Sigmoid colon (tissue), 7 donors: ENCODE measurements at regions of chr9 and their contacts with region 1.

Region 1: GRCh38 chr9:87516222-87516925 is 18.7 kb downstream of the DAPK1 start:
- DNase-seq: peak; percentile 86
- H3K4me3 ChIP-seq: no peak overlapping the region
- H3K27ac ChIP-seq: peak overlapping the region; percentile 39 to 84 (median 68)
- H3K4me1 ChIP-seq: peaks cover 0 to 86% (median 70%) of the 10 kb centered on the region in 4 donors
- H3K27me3 ChIP-seq: no peaks in the 10 kb centered on the region
- CTCF ChIP-seq: no peak
- EP300 ChIP-seq: no peak
- POLR2A ChIP-seq: no peak

Region 2: GRCh38 chr9:87436716-87437115 is 79.7 kb before region 1 on chr9:
- intact Hi-C with region 1: no loop called
- DNase-seq: no peak
- H3K4me3 ChIP-seq: no peak overlapping the region
- H3K27ac ChIP-seq: no peak overlapping the region
- H3K4me1 ChIP-seq: peaks cover 0 to 7% (median 0%) of the 10 kb centered on the region in 4 donors
- H3K27me3 ChIP-seq: no peaks in the 10 kb centered on the region
- CTCF ChIP-seq: no peak
- EP300 ChIP-seq: no peak
- POLR2A ChIP-seq: no peak

Region 3: GRCh38 chr9:87554171-87554917 is 38.0 kb after region 1 on chr9:
- intact Hi-C with region 1: loop called (anchors 5 kb)
- DNase-seq: no peak
- H3K4me3 ChIP-seq: no peak overlapping the region
- H3K27ac ChIP-seq: peak overlapping the region; percentile 54 to 81 (median 72)
- H3K4me1 ChIP-seq: peaks cover 0 to 95% (median 82%) of the 10 kb centered on the region in 4 donors
- H3K27me3 ChIP-seq: no peaks in the 10 kb centered on the region
- CTCF ChIP-seq: no peak
- EP300 ChIP-seq: no peak
- POLR2A ChIP-seq: no peak

Region 4: GRCh38 chr9:87599901-87600610 is 83.7 kb after region 1 on chr9:
- intact Hi-C with region 1: loop called (anchors 5 kb)
- DNase-seq: peak; percentile 82
- H3K4me3 ChIP-seq: no peak overlapping the region
- H3K27ac ChIP-seq: peak overlapping the region; percentile 78 to 86 (median 81)
- H3K4me1 ChIP-seq: peaks cover 0 to 95% (median 94%) of the 10 kb centered on the region in 4 donors
- H3K27me3 ChIP-seq: no peaks in the 10 kb centered on the region
- CTCF ChIP-seq: no peak
- EP300 ChIP-seq: no peak
- POLR2A ChIP-seq: no peak